Motor neuron (in vitro differentiated cells): ENCODE measurements at regions of chr15 and their contacts with region 1.

Region 1: GRCh38 chr15:42920519-42921227 is at the start of gene TTBK2:
- ATAC-seq: peak; percentile 93 to 98 (median 97)
- H3K4me3 ChIP-seq: peak within 1 kb of the TSS; percentile 69 to 93 (median 78)
- H3K27ac ChIP-seq: peak within 1 kb of the TSS; percentile 64 to 73
- H3K4me1 ChIP-seq: peaks cover 7 to 13% of the 10 kb centered on the region in 2 donors
- total RNA-seq, gene TTBK2: 7.6 to 26.0 (median 20.3) TPM

Region 2: GRCh38 chr15:42650208-42651066 is 270.2 kb before region 1 on chr15:
- in situ Hi-C with region 1: no loop called
- ATAC-seq: peak; percentile 88 to 100 (median 98)
- H3K4me3 ChIP-seq: no peak overlapping the region
- H3K27ac ChIP-seq: no peak overlapping the region
- H3K4me1 ChIP-seq: no peaks in the 10 kb centered on the region

Region 3: DNA sequence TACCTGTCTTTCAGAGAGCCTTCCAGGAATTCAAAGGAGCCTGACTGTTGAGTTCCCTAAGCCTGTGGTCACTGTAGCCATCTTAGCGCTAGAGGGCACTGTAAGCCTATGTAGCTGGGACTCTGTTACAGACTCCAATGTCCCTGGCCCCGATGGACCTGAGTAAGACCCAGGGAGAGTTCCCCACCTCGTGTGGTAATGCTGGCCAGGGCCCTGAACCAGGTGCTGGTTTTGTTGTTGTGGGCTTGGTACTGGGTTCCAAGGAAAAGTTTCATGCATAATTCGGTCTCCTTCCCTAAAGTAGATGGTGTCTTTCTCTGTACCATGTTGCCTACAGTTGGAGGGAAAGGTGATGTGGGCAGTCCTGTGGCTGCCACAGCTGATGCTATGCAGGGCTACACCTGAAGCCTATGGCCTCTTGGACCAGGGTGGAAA is 216.2 kb before region 1 on chr15:
- in situ Hi-C with region 1: loop called in 3 of 9 experiments (anchors 10 to 25 kb)
- ATAC-seq: peak; percentile 84 to 100 (median 93)
- H3K4me3 ChIP-seq: no peak overlapping the region
- H3K27ac ChIP-seq: no peak overlapping the region
- H3K4me1 ChIP-seq: no peaks in the 10 kb centered on the region

Region 4: GRCh38 chr15:42716626-42717025 is 204.0 kb before region 1 on chr15:
- in situ Hi-C with region 1: loop called in 3 of 9 experiments (anchors 10 to 25 kb)
- ATAC-seq: no peak
- H3K4me3 ChIP-seq: no peak overlapping the region
- H3K27ac ChIP-seq: no peak overlapping the region
- H3K4me1 ChIP-seq: no peaks in the 10 kb centered on the region